Activated naive CD4-positive, alpha-beta T cell treated with anti-CD3 and anti-CD28 coated beads for 36 hours (primary cell): ENCODE measurements at regions of chr21 and their contacts with region 1.

Region 1: DNA sequence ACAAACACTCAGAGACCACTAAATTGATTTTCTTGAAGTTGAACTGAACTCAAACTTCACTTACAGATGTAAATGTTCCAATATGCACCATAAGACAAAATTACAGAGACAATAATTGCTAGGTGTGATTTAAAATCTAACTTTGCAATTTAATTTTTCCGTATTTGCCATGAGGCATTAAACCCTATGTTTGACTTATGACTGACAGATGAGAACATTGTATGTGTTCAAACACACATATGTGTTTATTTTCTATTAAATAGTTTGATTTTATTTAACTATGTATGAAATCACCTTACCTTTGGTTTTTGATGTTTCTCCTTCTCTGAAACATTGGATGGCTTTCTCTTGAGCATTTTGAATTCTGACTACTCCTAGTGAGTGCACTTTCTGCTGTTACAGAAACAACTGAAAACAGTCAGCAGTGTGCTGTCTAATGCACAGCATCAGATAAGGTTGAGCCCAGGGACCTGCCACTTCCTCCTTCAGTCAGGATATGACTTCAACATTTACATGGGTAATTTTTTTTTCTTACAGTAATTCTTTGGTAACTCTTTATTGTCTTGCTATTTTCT is at the start of gene SAMSN1:
- DNase-seq: peak; percentile 83
- H3K4me3 Mint-ChIP-seq: peak within 1 kb of the TSS; percentile 88
- H3K27ac Mint-ChIP-seq: peak within 1 kb of the TSS; percentile 92
- H3K4me1 Mint-ChIP-seq: peaks cover 53% of the 10 kb centered on the region
- H3K27me3 Mint-ChIP-seq: no peaks in the 10 kb centered on the region
- total RNA-seq, gene SAMSN1: 41.1 to 43.0 TPM

Region 2: GRCh38 chr21:14487490-14488432 is 58.2 kb before region 1 on chr21:
- CTCF ChIA-PET with region 1: no interaction called
- intact Hi-C with region 1: loop called (anchors 1 kb)
- DNase-seq: no peak
- H3K4me3 Mint-ChIP-seq: no peak overlapping the region
- H3K27ac Mint-ChIP-seq: peak overlapping the region; percentile 81
- H3K4me1 Mint-ChIP-seq: peaks cover 51% of the 10 kb centered on the region
- H3K27me3 Mint-ChIP-seq: no peaks in the 10 kb centered on the region

Region 3: GRCh38 chr21:14533504-14534428 is 12.2 kb before region 1 on chr21:
- CTCF ChIA-PET with region 1: interaction called, 6 read pairs
- intact Hi-C with region 1: loop called (anchors 1 kb)
- DNase-seq: no peak
- H3K4me3 Mint-ChIP-seq: peak overlapping the region; percentile 74
- H3K27ac Mint-ChIP-seq: peak overlapping the region; percentile 96
- H3K4me1 Mint-ChIP-seq: peaks cover 77% of the 10 kb centered on the region
- H3K27me3 Mint-ChIP-seq: no peaks in the 10 kb centered on the region

Region 4: GRCh38 chr21:14630556-14631069 is 84.6 kb after region 1 on chr21:
- CTCF ChIA-PET with region 1: no interaction called
- intact Hi-C with region 1: loop called (anchors 1 kb)
- DNase-seq: no peak
- H3K4me3 Mint-ChIP-seq: no peak overlapping the region
- H3K27ac Mint-ChIP-seq: peak overlapping the region; percentile 65
- H3K4me1 Mint-ChIP-seq: peaks cover 19% of the 10 kb centered on the region
- H3K27me3 Mint-ChIP-seq: no peaks in the 10 kb centered on the region

Region 5: DNA sequence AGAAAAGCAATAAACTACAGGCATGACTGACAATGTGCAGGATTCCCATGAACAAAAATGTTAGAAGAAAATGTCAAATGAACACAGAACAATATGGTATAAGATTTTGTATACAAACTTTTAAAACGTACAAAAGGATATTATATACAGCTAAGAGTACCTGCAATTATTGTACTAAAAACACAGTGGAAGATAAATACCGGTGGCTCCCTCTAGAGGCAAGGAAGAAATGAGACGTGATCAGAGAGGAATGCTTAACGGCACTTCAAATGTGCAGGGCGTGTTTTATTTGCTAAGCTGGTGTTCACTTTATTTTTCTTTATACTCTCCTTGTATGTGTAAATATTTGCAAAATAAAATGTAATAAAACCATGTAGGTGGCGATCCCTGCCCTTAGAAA is 191.9 kb after region 1 on chr21:
- CTCF ChIA-PET with region 1: interaction called, 12 read pairs
- intact Hi-C with region 1: loop called (anchors 2 kb)
- DNase-seq: peak; percentile 62
- H3K4me3 Mint-ChIP-seq: no peak overlapping the region
- H3K27ac Mint-ChIP-seq: no peak overlapping the region
- H3K4me1 Mint-ChIP-seq: peaks cover 31% of the 10 kb centered on the region
- H3K27me3 Mint-ChIP-seq: no peaks in the 10 kb centered on the region

Region 6: GRCh38 chr21:15221799-15222386 is 675.9 kb after region 1 on chr21:
- CTCF ChIA-PET with region 1: no interaction called
- intact Hi-C with region 1: loop called (anchors 1 kb)
- DNase-seq: peak; percentile 48
- H3K4me3 Mint-ChIP-seq: no peak overlapping the region
- H3K27ac Mint-ChIP-seq: peak overlapping the region; percentile 30
- H3K4me1 Mint-ChIP-seq: peaks cover 29% of the 10 kb centered on the region
- H3K27me3 Mint-ChIP-seq: peaks cover 4% of the 10 kb centered on the region

Region 7: DNA sequence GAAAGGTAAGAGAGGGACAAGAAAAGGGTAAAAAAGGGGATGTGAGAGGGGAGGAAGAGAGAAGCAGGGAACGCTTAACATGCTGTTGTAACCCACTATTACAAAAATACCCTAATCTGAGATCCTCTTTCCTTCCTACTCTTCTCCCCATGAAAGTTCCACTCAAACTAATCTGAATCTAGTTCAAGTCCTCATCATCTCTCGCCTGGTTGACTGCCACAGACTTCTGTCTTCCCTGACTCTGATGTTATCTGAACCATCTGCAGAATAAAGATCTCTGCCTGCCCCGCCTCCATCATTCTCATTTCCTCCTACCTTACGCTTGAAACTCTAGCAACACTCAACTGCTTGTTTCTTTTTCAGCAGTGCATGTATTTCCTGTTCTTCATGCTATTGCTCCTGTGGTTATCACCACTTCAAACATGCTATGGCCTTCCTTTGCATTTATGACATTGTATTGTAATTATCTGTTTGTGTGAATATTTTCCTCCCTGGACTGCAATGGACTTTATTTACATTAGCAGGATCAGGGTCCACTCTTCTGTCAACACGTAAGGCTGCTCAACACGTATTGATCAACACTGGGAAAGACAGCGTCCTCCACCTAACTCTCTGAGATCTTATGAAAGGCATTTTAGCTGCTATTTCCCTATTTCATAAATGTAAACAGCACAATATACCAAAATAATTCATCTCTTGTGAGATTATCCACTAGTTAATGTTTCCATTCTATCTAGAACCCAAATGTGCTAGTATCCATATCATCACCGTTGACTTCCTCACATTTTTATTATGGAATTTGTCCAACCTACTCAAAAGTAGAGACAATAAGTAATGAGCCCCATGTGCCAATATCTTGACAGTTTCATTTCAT is 968.3 kb after region 1 on chr21:
- CTCF ChIA-PET with region 1: no interaction called
- intact Hi-C with region 1: loop called (anchors 5 kb)
- DNase-seq: peak; percentile 72
- H3K4me3 Mint-ChIP-seq: peak overlapping the region; percentile 55
- H3K27ac Mint-ChIP-seq: peak overlapping the region; percentile 85
- H3K4me1 Mint-ChIP-seq: peaks cover 28% of the 10 kb centered on the region
- H3K27me3 Mint-ChIP-seq: no peaks in the 10 kb centered on the region